A673 (cell line): ENCODE measurements at regions of chr16 and their contacts with region 1.

Region 1: GRCh38 chr16:77660311-77660710 is 62.0 kb upstream of the NUDT7 start:
- DNase-seq: peak; percentile 55
- H3K4me3 ChIP-seq: no peak overlapping the region
- H3K27ac ChIP-seq: no peak overlapping the region
- H3K4me1 ChIP-seq: no peaks in the 10 kb centered on the region
- H3K27me3 ChIP-seq: no peaks in the 10 kb centered on the region
- CTCF ChIP-seq: peak; percentile 63

Region 2: DNA sequence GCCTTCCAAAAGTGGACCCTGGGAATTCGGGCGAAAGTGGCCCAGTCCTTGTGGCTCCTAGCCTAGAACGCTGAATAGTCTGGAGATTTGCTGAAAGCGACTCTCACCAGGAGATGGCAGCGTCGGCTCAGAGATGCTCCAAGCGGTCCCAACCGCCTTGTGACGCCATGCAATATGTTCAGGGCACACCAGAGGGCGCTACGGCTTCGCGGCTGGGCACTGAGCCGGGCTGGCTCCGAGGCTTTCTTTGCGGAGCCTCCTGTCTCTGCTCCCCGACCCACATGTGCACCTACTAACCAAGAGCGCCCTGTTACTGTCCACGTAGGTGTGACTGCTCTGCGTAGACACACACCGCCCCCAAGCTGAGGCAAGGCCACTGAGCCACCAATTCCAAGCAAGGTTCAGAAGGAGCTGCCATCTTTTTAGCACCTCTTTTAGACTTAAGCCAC is 424.2 kb before region 1 on chr16:
- CTCF ChIA-PET with region 1: no interaction called
- POLR2A ChIA-PET with region 1: no interaction called
- intact Hi-C with region 1: loop called (anchors 1 kb)
- DNase-seq: peak; percentile 88
- H3K4me3 ChIP-seq: no peak overlapping the region
- H3K27ac ChIP-seq: no peak overlapping the region
- H3K4me1 ChIP-seq: no peaks in the 10 kb centered on the region
- H3K27me3 ChIP-seq: no peaks in the 10 kb centered on the region
- CTCF ChIP-seq: peak; percentile 99

Region 3: DNA sequence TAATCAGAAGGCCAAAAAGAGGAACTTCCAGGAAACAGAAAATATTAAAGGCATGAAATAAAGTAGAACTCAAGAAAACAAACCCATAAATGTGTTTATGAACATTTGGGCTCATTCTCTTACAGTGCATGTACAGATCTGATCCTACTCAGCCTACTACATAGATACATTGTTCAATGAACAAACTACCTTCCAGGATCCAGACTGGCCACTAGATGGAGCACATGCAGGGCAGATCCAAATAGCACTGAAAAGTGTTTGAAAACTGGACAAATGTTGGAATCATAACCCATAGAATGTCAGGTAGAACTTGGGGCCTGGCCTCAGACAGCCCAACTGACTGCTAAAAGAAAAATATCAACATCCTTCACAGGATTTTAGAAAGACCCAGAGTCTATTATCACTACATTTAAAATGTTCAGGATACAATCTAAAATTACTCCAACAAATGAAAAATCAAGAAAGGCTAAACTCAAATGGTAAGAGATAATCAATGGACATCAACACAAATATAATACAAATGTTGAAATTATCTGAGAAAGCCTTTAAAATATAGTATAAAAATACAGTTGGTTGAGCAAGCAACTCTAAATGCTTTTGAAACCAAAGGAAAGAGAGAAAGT is 60.4 kb before region 1 on chr16:
- CTCF ChIA-PET with region 1: no interaction called
- POLR2A ChIA-PET with region 1: no interaction called
- intact Hi-C with region 1: loop called (anchors 5 kb)
- DNase-seq: peak; percentile 50
- H3K4me3 ChIP-seq: no peak overlapping the region
- H3K27ac ChIP-seq: no peak overlapping the region
- H3K4me1 ChIP-seq: no peaks in the 10 kb centered on the region
- H3K27me3 ChIP-seq: no peaks in the 10 kb centered on the region
- CTCF ChIP-seq: peak; percentile 75

Region 4: GRCh38 chr16:77647726-77648125 is 12.6 kb before region 1 on chr16:
- CTCF ChIA-PET with region 1: interaction called, 12 read pairs
- POLR2A ChIA-PET with region 1: no interaction called
- intact Hi-C with region 1: no loop called
- DNase-seq: no peak
- H3K4me3 ChIP-seq: no peak overlapping the region
- H3K27ac ChIP-seq: no peak overlapping the region
- H3K4me1 ChIP-seq: no peaks in the 10 kb centered on the region
- H3K27me3 ChIP-seq: peaks cover 6% of the 10 kb centered on the region
- CTCF ChIP-seq: no peak

Region 5: DNA sequence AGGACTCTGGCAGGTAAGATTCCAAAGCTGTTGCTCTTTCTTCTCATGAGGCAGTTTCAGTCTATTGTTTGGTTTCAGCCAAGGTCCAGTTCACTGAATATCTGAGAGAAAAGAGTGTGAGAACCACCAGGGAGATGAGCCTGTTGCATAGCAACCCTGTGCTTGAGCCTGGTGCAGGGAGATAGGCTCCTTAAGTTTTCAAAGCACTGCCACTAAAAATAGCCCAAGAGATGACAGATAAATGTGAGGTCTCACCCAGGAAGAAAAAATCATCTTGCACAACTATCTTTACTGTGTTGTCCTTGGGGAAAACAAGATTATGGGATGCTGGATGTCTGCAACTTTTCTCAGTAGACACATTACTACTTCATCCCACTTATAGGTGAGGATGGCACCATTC is 35.8 kb after region 1 on chr16:
- CTCF ChIA-PET with region 1: no interaction called
- POLR2A ChIA-PET with region 1: no interaction called
- intact Hi-C with region 1: no loop called
- DNase-seq: no peak
- H3K4me3 ChIP-seq: no peak overlapping the region
- H3K27ac ChIP-seq: no peak overlapping the region
- H3K4me1 ChIP-seq: no peaks in the 10 kb centered on the region
- H3K27me3 ChIP-seq: peaks cover 6% of the 10 kb centered on the region
- CTCF ChIP-seq: no peak